GM13977 (cell line): ENCODE measurements at regions of chr21 and their contacts with region 1.

Region 1: DNA sequence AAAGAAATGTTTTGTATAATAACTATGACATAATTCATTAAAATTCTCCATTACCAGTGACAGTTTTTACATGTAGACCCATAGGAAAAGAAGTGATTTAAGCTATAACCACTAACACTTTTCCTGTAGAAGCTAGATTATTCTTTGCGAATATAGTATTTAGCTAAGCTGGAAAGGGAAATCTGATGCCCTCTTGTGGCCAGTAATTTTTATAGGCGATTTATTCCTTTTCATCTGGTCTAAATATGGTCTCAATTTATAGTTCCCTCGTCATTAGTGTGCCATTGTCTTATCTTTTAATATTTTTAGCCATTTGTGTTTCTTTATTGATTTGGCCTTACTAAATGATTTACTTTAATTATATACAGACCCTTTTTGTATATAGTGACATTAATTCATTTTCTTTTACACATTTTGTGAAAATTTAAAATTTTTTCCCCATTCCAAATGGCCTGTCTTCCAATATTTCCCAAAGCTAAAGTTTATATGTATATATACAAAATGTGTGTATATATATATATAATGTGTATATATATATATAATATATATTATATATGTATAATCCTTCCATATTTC is 26.7 kb downstream of the BTG3 start:
- DNase-seq: peak; percentile 27
- CTCF ChIP-seq: peak; percentile 47

Region 2: DNA sequence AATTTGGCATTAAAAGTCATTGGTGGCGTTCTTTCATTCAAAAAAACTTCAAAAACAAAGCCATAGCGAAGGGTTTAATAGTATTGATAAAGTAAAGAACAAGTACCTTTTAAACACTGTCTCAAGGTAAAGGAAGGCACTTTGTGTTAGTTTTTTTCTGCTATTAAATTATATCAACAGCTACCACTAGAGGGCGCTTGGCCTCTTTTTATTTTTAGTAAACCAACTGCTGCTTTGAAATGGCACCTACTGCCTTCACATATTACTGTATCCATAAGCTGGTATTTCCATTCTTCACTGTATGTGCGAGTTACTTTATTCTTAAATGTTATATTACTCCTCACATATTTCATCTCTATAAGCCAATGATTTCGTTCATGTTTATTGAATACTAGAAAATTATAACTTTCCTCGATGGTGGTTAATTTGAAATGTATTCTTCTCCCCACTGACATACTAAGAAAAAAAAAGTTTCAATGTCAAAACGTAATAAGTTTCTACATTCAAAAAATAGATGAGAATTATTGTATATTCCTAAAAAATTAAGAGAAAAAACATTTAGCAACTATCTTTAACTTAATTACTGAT is 198.8 kb before region 1 on chr21:
- in situ Hi-C with region 1: loop called (anchors 25 kb)
- DNase-seq: peak; percentile 46
- CTCF ChIP-seq: peak; percentile 70